Testis (tissue), 5 donors: ENCODE measurements at regions of chr2 and their contacts with region 1.

Region 1: DNA sequence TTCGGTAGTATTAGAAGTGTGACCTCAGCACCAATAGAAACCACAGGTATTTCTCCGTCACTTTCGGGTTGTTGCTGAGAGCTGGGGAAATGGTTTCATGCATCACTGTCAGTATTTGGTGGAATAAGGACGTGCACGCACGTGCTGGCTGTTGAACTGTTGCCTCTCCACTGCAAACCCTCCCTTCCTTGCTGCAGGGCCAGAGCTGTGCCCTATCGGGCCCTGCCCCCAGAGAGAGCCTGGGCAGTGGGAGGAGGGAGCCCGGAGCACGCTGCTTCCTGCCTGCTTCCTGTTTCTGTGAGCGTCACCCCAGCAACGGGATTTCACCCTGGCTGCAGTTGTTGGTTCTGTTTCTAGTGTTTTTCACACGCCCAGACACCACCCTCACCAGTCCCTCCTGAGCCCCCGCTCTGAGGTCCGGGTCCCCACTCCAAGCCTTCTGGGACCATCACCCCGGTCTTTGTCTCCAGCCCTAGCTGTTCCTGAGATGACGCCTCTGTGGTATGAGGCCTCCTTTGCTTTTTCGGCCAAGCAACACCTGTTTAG is 47.4 kb downstream of the LRRFIP1 start:
- DNase-seq: peak; percentile 85
- H3K4me3 ChIP-seq: no peak overlapping the region
- H3K27ac ChIP-seq: peak overlapping the region in 1 of 2 donors; percentile 42
- H3K4me1 ChIP-seq: peaks cover 19% of the 10 kb centered on the region
- H3K27me3 ChIP-seq: no peaks in the 10 kb centered on the region
- CTCF ChIP-seq: peak in 1 of 3 experiments; percentile 18
- POLR2A ChIP-seq: no peak

Region 2: DNA sequence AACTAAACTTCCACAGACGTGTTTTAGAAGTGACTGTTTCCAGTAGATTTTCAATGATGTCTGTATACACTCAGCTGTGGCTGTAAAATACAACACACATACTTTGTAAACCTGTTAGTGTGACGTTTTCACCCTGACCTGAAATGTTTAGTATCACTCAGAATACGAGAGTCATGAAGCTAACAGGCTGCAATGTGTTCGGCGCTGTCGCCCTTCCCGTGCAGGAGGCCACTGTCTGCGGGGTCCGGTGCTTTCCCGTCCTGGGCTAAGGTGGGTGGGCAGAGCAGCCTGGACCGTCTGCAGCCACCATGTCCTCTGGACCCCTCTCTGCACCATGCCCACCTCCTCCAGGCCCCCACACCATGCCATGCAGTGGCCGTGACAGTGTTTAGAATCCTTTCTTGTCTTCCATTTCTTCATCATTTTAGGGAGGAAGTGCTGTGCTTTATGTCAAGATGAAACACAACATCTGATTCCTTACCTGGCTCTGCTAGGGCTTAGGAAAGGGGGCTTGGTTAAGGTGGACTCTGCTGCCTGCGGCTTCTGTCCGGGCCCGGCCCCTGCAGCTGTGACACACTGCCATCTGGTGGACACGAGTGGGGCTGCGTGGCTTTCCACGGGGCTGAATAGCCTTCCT is 69.9 kb after region 1 on chr2:
- intact Hi-C with region 1: loop called (anchors 10 kb)
- DNase-seq: peak; percentile 86
- H3K4me3 ChIP-seq: no peak overlapping the region
- H3K27ac ChIP-seq: no peak overlapping the region
- H3K4me1 ChIP-seq: no peaks in the 10 kb centered on the region
- H3K27me3 ChIP-seq: no peaks in the 10 kb centered on the region
- CTCF ChIP-seq: peak; percentile 94 to 95 (median 94)
- POLR2A ChIP-seq: no peak

Region 3: DNA sequence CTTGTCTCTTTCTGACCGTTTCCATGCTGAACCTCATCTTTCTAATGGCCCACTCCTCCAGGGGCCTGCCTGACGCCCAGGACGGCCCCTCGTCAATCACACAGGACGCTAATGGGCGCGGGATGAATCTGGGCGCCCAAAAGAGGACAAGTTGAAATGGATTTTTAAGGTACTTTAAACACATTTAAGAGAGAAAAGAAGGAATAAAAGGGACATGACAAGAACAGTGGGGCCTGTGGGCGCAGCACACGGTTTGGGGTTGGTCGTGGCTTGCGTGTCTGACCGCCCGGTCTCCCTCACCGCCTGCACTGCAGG is 291.4 kb after region 1 on chr2:
- intact Hi-C with region 1: no loop called
- DNase-seq: no peak
- H3K4me3 ChIP-seq: peak overlapping the region; percentile 67 to 73
- H3K27ac ChIP-seq: no peak overlapping the region
- H3K4me1 ChIP-seq: peaks cover 23% of the 10 kb centered on the region
- H3K27me3 ChIP-seq: no peaks in the 10 kb centered on the region
- CTCF ChIP-seq: no peak
- POLR2A ChIP-seq: no peak